ENCODE measurements at regions of chr9 and their contacts with region 1.

Region 1: GRCh38 chr9:137590462-137591383 is at the start of gene ZMYND19:
- DNase-seq: peak; percentile 91
- H3K4me3 Mint-ChIP-seq: peak within 1 kb of the TSS; percentile 98
- H3K27ac Mint-ChIP-seq: peak within 1 kb of the TSS; percentile 86
- H3K4me1 Mint-ChIP-seq: peaks cover 22% of the 10 kb centered on the region
- H3K27me3 Mint-ChIP-seq: no peaks in the 10 kb centered on the region
- total RNA-seq, gene ZMYND19: 39.7 to 42.6 TPM

Region 2: GRCh38 chr9:137316012-137316976 is 274.4 kb before region 1 on chr9:
- CTCF ChIA-PET with region 1: no interaction called
- POLR2A ChIA-PET with region 1: no interaction called
- intact Hi-C with region 1: no loop called
- DNase-seq: peak; percentile 15
- H3K4me3 Mint-ChIP-seq: no peak overlapping the region
- H3K27ac Mint-ChIP-seq: no peak overlapping the region
- H3K4me1 Mint-ChIP-seq: peaks cover 5% of the 10 kb centered on the region
- H3K27me3 Mint-ChIP-seq: peaks cover 5% of the 10 kb centered on the region

Region 3: DNA sequence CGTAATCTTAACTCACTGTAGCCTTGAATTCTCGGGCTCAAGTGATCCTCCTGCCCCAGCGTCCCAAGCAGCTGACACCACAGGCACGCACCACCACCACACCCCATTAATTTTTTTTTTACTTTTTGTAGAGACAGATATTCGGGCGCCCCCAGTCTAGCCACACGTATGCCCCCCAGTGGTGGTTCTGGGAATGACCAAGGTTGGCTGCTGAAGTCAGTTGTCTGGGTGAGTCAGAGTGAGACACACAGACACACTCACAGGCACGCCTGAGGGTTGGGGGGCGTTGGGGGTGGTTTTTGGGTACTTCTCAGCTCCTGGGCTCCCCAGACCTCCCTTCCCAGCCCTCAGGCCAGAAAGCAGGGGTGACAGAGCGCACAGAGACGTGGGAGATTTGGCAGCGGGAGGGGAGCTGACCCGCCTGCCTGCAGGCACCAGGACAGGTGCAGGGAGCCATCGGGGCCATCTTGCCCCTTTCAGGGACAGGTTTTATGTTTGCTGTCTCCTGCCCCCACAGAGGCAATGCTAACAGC is 145.4 kb before region 1 on chr9:
- CTCF ChIA-PET with region 1: no interaction called
- POLR2A ChIA-PET with region 1: no interaction called
- intact Hi-C with region 1: no loop called
- DNase-seq: peak; percentile 90
- H3K4me3 Mint-ChIP-seq: no peak overlapping the region
- H3K27ac Mint-ChIP-seq: no peak overlapping the region
- H3K4me1 Mint-ChIP-seq: peaks cover 13% of the 10 kb centered on the region
- H3K27me3 Mint-ChIP-seq: peaks cover 4% of the 10 kb centered on the region

Region 4: GRCh38 chr9:137551651-137552384 is 38.9 kb before region 1 on chr9 and contains the start of gene MRPL41:
- CTCF ChIA-PET with region 1: interaction called, 6 read pairs
- POLR2A ChIA-PET with region 1: no interaction called
- intact Hi-C with region 1: loop called (anchors 2 kb)
- DNase-seq: peak; percentile 91
- H3K4me3 Mint-ChIP-seq: peak within 1 kb of the TSS; percentile 79
- H3K27ac Mint-ChIP-seq: peak within 1 kb of the TSS; percentile 65
- H3K4me1 Mint-ChIP-seq: peaks cover 17% of the 10 kb centered on the region
- H3K27me3 Mint-ChIP-seq: no peaks in the 10 kb centered on the region
- total RNA-seq, gene MRPL41: 48.0 to 48.8 TPM

Region 5: DNA sequence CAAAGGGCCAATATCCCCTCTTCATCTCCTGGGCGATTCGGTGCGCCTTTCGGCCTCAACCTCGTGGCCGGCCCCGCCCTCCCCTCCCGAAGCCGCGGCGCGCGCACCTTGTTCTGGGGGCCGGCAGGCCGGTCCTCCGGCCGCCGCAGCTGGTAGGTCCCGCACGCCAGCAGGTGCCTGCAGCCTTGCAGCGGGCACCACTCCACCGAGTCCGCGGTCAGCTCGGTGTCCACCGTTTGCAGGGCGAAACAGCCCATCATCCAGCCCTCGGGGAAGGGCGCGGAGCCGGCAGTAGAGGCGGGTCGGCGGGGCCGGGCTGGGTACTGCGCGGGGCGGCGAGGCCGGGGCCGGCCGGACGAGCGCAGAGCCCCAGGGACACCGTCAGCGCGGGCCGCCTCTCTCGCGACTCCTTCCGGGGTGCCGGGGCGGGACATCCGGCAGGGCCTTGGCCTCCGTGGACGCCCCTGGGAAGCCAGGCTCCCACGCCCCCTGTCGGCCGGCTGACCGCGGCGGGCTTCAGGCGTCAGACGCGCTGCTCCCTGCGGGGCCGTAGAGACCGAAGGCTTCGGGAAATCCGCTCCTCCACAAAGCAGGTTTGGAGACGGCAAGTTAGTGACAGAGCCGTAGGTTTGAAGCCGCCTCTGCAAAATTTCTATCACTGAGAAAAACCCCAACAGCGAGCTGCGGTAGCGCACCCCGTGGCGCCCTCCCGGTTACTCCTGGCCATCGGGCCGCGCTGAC is 12.0 kb before region 1 on chr9 and contains the start of gene DPH7:
- CTCF ChIA-PET with region 1: interaction called, 23 read pairs
- POLR2A ChIA-PET with region 1: interaction called, 9 read pairs
- intact Hi-C with region 1: no loop called
- DNase-seq: peak; percentile 96
- H3K4me3 Mint-ChIP-seq: peak within 1 kb of the TSS; percentile 71
- H3K27ac Mint-ChIP-seq: peak within 1 kb of the TSS; percentile 4
- H3K4me1 Mint-ChIP-seq: peaks cover 37% of the 10 kb centered on the region
- H3K27me3 Mint-ChIP-seq: no peaks in the 10 kb centered on the region
- total RNA-seq, gene DPH7: 26.6 to 30.3 TPM

Region 6: DNA sequence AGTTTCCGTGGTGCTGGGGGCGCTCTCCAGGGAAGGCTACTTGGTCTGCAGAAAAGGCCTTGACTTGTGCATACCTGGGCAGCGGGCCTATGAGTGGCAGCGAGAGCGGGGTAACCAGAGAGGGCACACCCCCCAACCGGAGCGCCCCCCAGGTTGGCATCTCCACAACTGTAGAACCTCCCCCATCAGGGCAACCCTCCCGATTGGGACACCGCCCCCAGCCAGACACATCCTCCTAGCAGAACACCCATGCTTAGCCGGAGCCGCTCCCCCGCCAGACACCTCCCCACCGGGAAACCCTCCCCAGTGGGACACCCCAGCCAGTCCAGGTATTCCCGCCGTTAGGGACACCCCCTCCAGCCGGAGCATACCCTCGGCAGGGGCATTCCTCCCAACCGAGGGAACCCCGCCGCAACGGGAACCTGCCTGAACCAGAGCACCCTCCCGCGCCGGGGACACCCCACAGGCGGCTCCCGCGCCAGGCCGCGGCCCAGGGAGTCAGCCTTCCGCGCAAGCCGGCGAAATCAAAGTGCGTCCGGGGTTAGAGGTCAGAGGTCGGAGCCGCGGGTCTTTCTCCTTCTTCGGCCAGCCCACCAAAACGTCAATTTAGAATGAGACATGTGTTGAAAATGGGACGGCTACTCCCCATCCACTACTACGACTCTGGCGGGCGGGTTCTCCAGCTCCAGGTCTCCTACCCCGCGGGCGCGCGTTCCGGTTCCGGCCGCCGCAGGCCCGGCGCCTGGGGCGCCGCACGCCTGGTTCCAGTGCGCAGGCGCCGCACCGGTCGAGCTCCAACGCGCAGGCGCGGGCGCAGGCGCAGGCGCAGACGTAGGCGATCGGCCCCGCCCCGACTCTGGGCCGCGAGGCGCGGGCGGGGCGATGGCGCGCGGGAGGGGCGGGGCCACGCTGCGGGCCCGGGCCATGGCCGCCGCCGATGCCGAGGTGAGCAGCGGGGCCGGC is 27.7 kb after region 1 on chr9 and contains the start of gene EHMT1:
- CTCF ChIA-PET with region 1: no interaction called
- POLR2A ChIA-PET with region 1: interaction called, 4 read pairs
- intact Hi-C with region 1: loop called (anchors 1 kb)
- DNase-seq: peak; percentile 93
- H3K4me3 Mint-ChIP-seq: peak within 1 kb of the TSS; percentile 85
- H3K27ac Mint-ChIP-seq: peak within 1 kb of the TSS; percentile 87
- H3K4me1 Mint-ChIP-seq: peaks cover 41% of the 10 kb centered on the region
- H3K27me3 Mint-ChIP-seq: no peaks in the 10 kb centered on the region
- total RNA-seq, gene EHMT1: 66.0 to 70.8 TPM

Measured in activated CD4-positive, alpha-beta memory T cell treated with anti-CD3 and anti-CD28 coated beads for 36 hours (primary cell).